ENCODE measurements at regions of chrX and their contacts with region 1.

Region 1: GRCh38 chrX:12701628-12702027 is 89.6 kb upstream of the PRPS2 start:
- DNase-seq: no peak
- H3K4me3 Mint-ChIP-seq: no peak overlapping the region
- H3K27ac Mint-ChIP-seq: no peak overlapping the region
- H3K4me1 Mint-ChIP-seq: no peaks in the 10 kb centered on the region
- H3K27me3 Mint-ChIP-seq: peaks cover 8% of the 10 kb centered on the region

Region 2: GRCh38 chrX:12497832-12498591 is 203.6 kb before region 1 on chrX:
- intact Hi-C with region 1: loop called (anchors 2 kb)
- DNase-seq: no peak
- H3K4me3 Mint-ChIP-seq: no peak overlapping the region
- H3K27ac Mint-ChIP-seq: no peak overlapping the region
- H3K4me1 Mint-ChIP-seq: no peaks in the 10 kb centered on the region
- H3K27me3 Mint-ChIP-seq: no peaks in the 10 kb centered on the region

Region 3: GRCh38 chrX:12648995-12649394 is 52.6 kb before region 1 on chrX:
- intact Hi-C with region 1: no loop called
- DNase-seq: no peak
- H3K4me3 Mint-ChIP-seq: no peak overlapping the region
- H3K27ac Mint-ChIP-seq: no peak overlapping the region
- H3K4me1 Mint-ChIP-seq: no peaks in the 10 kb centered on the region
- H3K27me3 Mint-ChIP-seq: no peaks in the 10 kb centered on the region